HCT116 (cell line): ENCODE measurements at regions of chr10 and their contacts with region 1.

Region 1: GRCh38 chr10:123994417-123995081 is 98.8 kb downstream of the CHST15 start:
- DNase-seq: peak; percentile 74
- ATAC-seq: peak; percentile 78
- H3K4me3 ChIP-seq: peak overlapping the region; percentile 60 to 73
- H3K27ac ChIP-seq: peak overlapping the region; percentile 84
- H3K4me1 ChIP-seq: peaks cover 17 to 30% of the 10 kb centered on the region in 2 experiments
- H3K27me3 ChIP-seq: no peaks in the 10 kb centered on the region
- CTCF ChIP-seq: peak in 2 of 3 experiments; percentile 99; a peak in 4 of 6 replicates
- POLR2A ChIP-seq: no peak
- RAD21 ChIP-seq: no peak

Region 2: GRCh38 chr10:123858077-123858681 is 136.4 kb before region 1 on chr10:
- CTCF ChIA-PET with region 1: no interaction called
- POLR2A ChIA-PET with region 1: no interaction called
- RAD21 ChIA-PET with region 1: no interaction called
- intact Hi-C with region 1: no loop called
- DNase-seq: no peak
- ATAC-seq: peak; percentile 18; the same call in 1 of the 2 replicates
- H3K4me3 ChIP-seq: no peak overlapping the region
- H3K27ac ChIP-seq: no peak overlapping the region
- H3K4me1 ChIP-seq: no peaks in the 10 kb centered on the region
- H3K27me3 ChIP-seq: peaks cover 45% of the 10 kb centered on the region
- CTCF ChIP-seq: no peak
- POLR2A ChIP-seq: no peak
- RAD21 ChIP-seq: no peak

Region 3: GRCh38 chr10:123967396-123968243 is 26.9 kb before region 1 on chr10:
- CTCF ChIA-PET with region 1: no interaction called
- POLR2A ChIA-PET with region 1: no interaction called
- RAD21 ChIA-PET with region 1: no interaction called
- intact Hi-C with region 1: no loop called
- DNase-seq: peak; percentile 49
- ATAC-seq: peak; percentile 96
- H3K4me3 ChIP-seq: no peak overlapping the region
- H3K27ac ChIP-seq: no peak overlapping the region
- H3K4me1 ChIP-seq: peaks cover 0 to 10% of the 10 kb centered on the region in 2 experiments; a peak in 1 of 4 replicates
- H3K27me3 ChIP-seq: peaks cover 21% of the 10 kb centered on the region
- CTCF ChIP-seq: peak; percentile 96 to 99 (median 99)
- POLR2A ChIP-seq: no peak
- RAD21 ChIP-seq: peak; percentile 99

Region 4: GRCh38 chr10:124058346-124059003 is 63.9 kb after region 1 on chr10:
- CTCF ChIA-PET with region 1: no interaction called
- POLR2A ChIA-PET with region 1: no interaction called
- RAD21 ChIA-PET with region 1: no interaction called
- intact Hi-C with region 1: no loop called
- DNase-seq: no peak
- ATAC-seq: no peak
- H3K4me3 ChIP-seq: no peak overlapping the region
- H3K27ac ChIP-seq: no peak overlapping the region
- H3K4me1 ChIP-seq: peaks cover 10 to 27% of the 10 kb centered on the region in 2 experiments; a peak in 3 of 4 replicates
- H3K27me3 ChIP-seq: no peaks in the 10 kb centered on the region
- CTCF ChIP-seq: no peak
- POLR2A ChIP-seq: no peak
- RAD21 ChIP-seq: no peak

Region 5: GRCh38 chr10:124092860-124093773 is 98.6 kb after region 1 on chr10 and contains the start of gene CHST15:
- CTCF ChIA-PET with region 1: interaction called, 6 read pairs
- POLR2A ChIA-PET with region 1: interaction called, 3 read pairs
- RAD21 ChIA-PET with region 1: interaction called in 1 of 2 experiments, 5 read pairs
- intact Hi-C with region 1: loop called (anchors 2 kb)
- DNase-seq: peak; percentile 74
- ATAC-seq: peak; percentile 55
- H3K4me3 ChIP-seq: peak within 1 kb of the TSS; percentile 80 to 82
- H3K27ac ChIP-seq: peak within 1 kb of the TSS; percentile 93
- H3K4me1 ChIP-seq: peaks cover 25 to 44% of the 10 kb centered on the region in 2 experiments
- H3K27me3 ChIP-seq: no peaks in the 10 kb centered on the region
- CTCF ChIP-seq: peak in 1 of 3 experiments; percentile 18; a peak in 1 of 6 replicates
- POLR2A ChIP-seq: peak; percentile 46
- RAD21 ChIP-seq: no peak
- total RNA-seq, gene CHST15: 47.2 TPM

Region 6: DNA sequence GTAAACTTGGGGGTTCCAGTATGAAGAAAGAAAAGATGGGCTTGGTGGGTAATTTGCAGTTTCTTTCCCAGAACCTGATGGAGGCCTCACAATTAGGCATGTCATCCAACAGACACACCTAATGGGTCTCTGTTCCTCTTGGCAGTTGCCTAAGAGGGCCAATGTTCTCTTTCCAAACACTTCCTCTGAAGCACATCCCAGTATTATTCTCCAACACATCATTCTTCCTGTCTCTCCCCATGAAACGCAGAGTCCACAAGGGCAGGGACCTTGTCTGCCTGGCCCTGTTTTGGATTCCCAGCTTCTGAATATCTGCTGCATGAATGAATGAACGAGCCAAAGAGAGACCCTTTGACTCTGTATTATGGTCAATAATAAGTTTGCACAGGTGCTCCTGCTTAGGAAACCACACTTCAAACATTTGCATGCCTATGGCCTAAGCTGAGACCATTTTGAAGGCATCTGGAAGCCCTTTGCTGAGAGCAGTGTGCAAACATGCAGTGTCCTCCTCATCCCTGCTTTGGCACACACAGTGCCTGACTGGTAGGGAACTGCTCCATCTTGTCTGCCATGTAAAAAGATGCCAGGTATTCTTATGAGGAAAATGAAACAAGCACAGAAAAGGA is 199.8 kb after region 1 on chr10:
- CTCF ChIA-PET with region 1: interaction called, 34 read pairs
- POLR2A ChIA-PET with region 1: interaction called, 3 read pairs
- RAD21 ChIA-PET with region 1: interaction called, 3 to 4 read pairs
- intact Hi-C with region 1: no loop called
- DNase-seq: no peak
- ATAC-seq: no peak
- H3K4me3 ChIP-seq: peak overlapping the region in 1 of 2 experiments; percentile 66; a peak in 1 of 4 replicates
- H3K27ac ChIP-seq: no peak overlapping the region
- H3K4me1 ChIP-seq: peaks cover 0 to 15% of the 10 kb centered on the region in 2 experiments; a peak in 1 of 4 replicates
- H3K27me3 ChIP-seq: no peaks in the 10 kb centered on the region
- CTCF ChIP-seq: no peak
- POLR2A ChIP-seq: no peak
- RAD21 ChIP-seq: no peak

Region 7: GRCh38 chr10:124296121-124296812 is 301.7 kb after region 1 on chr10:
- CTCF ChIA-PET with region 1: interaction called, 13 read pairs
- POLR2A ChIA-PET with region 1: no interaction called
- RAD21 ChIA-PET with region 1: interaction called in 1 of 2 experiments, 3 read pairs
- intact Hi-C with region 1: no loop called
- DNase-seq: no peak
- ATAC-seq: peak; percentile 59
- H3K4me3 ChIP-seq: no peak overlapping the region
- H3K27ac ChIP-seq: no peak overlapping the region
- H3K4me1 ChIP-seq: no peaks in the 10 kb centered on the region
- H3K27me3 ChIP-seq: no peaks in the 10 kb centered on the region
- CTCF ChIP-seq: peak in 2 of 3 experiments; percentile 20 to 41; a peak in 3 of 6 replicates
- POLR2A ChIP-seq: no peak
- RAD21 ChIP-seq: peak; percentile 62

Region 8: DNA sequence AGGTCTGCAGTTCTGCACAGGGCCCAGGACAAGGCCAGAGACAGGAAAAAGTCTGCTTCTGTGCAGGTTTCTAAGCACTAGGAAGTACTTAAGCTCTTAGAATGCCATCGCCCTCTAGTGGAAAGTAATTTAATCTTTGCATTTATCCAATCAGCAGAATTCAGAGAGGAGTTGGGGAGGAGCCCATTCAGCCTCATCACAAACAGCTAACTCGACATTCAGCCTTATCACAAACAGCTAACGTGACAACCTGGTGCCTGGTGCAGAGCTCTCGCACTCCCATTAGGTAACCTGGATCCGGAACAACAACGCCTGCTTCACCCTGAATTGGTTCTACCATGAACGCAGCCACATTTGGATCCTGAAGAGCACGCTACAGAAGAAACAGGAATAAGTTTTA is 409.0 kb after region 1 on chr10:
- CTCF ChIA-PET with region 1: interaction called, 64 read pairs
- POLR2A ChIA-PET with region 1: interaction called, 3 read pairs
- RAD21 ChIA-PET with region 1: interaction called, 4 to 7 read pairs
- intact Hi-C with region 1: loop called (anchors 1 kb)
- DNase-seq: peak; percentile 89
- ATAC-seq: peak; percentile 98
- H3K4me3 ChIP-seq: no peak overlapping the region
- H3K27ac ChIP-seq: 0 out of 2 replicates have a peak overlapping the region, but pooled peaks have one; percentile 4
- H3K4me1 ChIP-seq: no peaks in the 10 kb centered on the region
- H3K27me3 ChIP-seq: no peaks in the 10 kb centered on the region
- CTCF ChIP-seq: peak; percentile 70 to 86 (median 75); a peak in 5 of 6 replicates
- POLR2A ChIP-seq: no peak
- RAD21 ChIP-seq: peak; percentile 75